Head of caudate nucleus (tissue), 42 donors: ENCODE measurements at regions of chr10 and their contacts with region 1.

Region 1: GRCh38 chr10:101782811-101783735 is at the start of gene NPM3:
- DNase-seq: peak; percentile 59 to 90 (median 79)

Region 2: GRCh38 chr10:101602761-101603398 is 180.2 kb before region 1 on chr10:
- intact Hi-C with region 1: loop called (anchors 5 kb)
- DNase-seq: peak; percentile 53 to 91 (median 80)